Naive thymus-derived CD4-positive, alpha-beta T cell (primary cell): ENCODE measurements at regions of chr4 and their contacts with region 1.

Region 1: GRCh38 chr4:113394730-113395530 is 345.5 kb downstream of the ANK2 start:
- DNase-seq: peak in 8 of 9 donors; percentile 35 to 77 (median 66)
- ATAC-seq: peak; percentile 90
- H3K4me3 ChIP-seq: no peak overlapping the region
- H3K4me3 Mint-ChIP-seq: no peak overlapping the region
- H3K27ac ChIP-seq: no peak overlapping the region
- H3K27ac Mint-ChIP-seq: no peak overlapping the region
- H3K4me1 ChIP-seq: no peaks in the 10 kb centered on the region
- H3K4me1 Mint-ChIP-seq: peaks cover 0 to 2% (median 0%) of the 10 kb centered on the region in 7 donors
- H3K27me3 ChIP-seq: no peaks in the 10 kb centered on the region
- H3K27me3 Mint-ChIP-seq: peaks cover 0 to 7% (median 4%) of the 10 kb centered on the region in 5 donors

Region 2: GRCh38 chr4:113781439-113782040 is 386.6 kb after region 1 on chr4:
- CTCF ChIA-PET with region 1: no interaction called
- POLR2A ChIA-PET with region 1: no interaction called
- intact Hi-C with region 1: loop called (anchors 5 kb)
- DNase-seq: peak in 5 of 9 donors; percentile 21 to 28 (median 27)
- ATAC-seq: peak; percentile 41
- H3K4me3 ChIP-seq: no peak overlapping the region
- H3K4me3 Mint-ChIP-seq: no peak overlapping the region
- H3K27ac ChIP-seq: no peak overlapping the region
- H3K27ac Mint-ChIP-seq: no peak overlapping the region
- H3K4me1 ChIP-seq: no peaks in the 10 kb centered on the region
- H3K4me1 Mint-ChIP-seq: peaks cover 5 to 24% (median 12%) of the 10 kb centered on the region in 7 donors
- H3K27me3 ChIP-seq: no peaks in the 10 kb centered on the region
- H3K27me3 Mint-ChIP-seq: no peaks in the 10 kb centered on the region

Region 3: DNA sequence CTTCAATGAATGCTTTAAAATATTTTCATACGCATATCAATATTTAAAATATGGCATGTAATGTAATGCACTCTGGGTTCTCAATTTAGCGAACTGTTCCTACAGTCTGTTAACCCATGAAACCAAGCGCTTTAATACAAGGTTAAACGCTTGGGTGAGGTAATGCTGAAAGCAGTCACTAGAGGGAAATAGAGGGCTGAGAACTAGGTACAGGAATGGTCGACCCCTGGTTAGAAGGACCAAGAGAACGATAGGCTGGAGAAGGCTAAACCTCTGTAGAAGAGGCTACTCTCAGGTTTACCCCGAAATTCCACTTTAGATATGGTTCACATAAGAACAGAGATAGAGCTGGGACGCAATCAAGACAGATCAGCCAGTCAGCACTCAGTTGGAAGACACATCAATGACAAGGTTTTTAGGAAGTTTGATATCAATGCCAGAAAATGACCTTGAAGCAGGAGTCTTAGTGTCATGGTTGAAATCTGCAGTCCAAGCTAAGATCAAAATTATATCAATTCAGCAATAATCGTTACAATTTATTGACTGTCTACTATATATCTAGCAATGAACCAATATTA is 557.6 kb after region 1 on chr4:
- CTCF ChIA-PET with region 1: no interaction called
- POLR2A ChIA-PET with region 1: no interaction called
- intact Hi-C with region 1: loop called (anchors 1 to 2 kb)
- DNase-seq: peak in 5 of 9 donors; percentile 8 to 33 (median 21)
- ATAC-seq: peak; percentile 81
- H3K4me3 ChIP-seq: no peak overlapping the region
- H3K4me3 Mint-ChIP-seq: peak overlapping the region in 1 of 10 donors; percentile 13
- H3K27ac ChIP-seq: no peak overlapping the region
- H3K27ac Mint-ChIP-seq: no peak overlapping the region
- H3K4me1 ChIP-seq: no peaks in the 10 kb centered on the region
- H3K4me1 Mint-ChIP-seq: peaks cover 0 to 30% (median 20%) of the 10 kb centered on the region in 7 donors
- H3K27me3 ChIP-seq: no peaks in the 10 kb centered on the region
- H3K27me3 Mint-ChIP-seq: peaks cover 0 to 19% (median 5%) of the 10 kb centered on the region in 5 donors

Region 4: GRCh38 chr4:114386637-114387233 is 991.8 kb after region 1 on chr4:
- CTCF ChIA-PET with region 1: interaction called, 3 read pairs
- POLR2A ChIA-PET with region 1: no interaction called
- intact Hi-C with region 1: loop called (anchors 1 kb)
- DNase-seq: peak in 2 of 9 donors; percentile 10 to 11
- ATAC-seq: no peak
- H3K4me3 ChIP-seq: no peak overlapping the region
- H3K4me3 Mint-ChIP-seq: no peak overlapping the region
- H3K27ac ChIP-seq: no peak overlapping the region
- H3K27ac Mint-ChIP-seq: no peak overlapping the region
- H3K4me1 ChIP-seq: no peaks in the 10 kb centered on the region
- H3K4me1 Mint-ChIP-seq: peaks cover 0 to 2% (median 0%) of the 10 kb centered on the region in 7 donors
- H3K27me3 ChIP-seq: no peaks in the 10 kb centered on the region
- H3K27me3 Mint-ChIP-seq: peaks cover 0 to 17% (median 14%) of the 10 kb centered on the region in 5 donors

Region 5: DNA sequence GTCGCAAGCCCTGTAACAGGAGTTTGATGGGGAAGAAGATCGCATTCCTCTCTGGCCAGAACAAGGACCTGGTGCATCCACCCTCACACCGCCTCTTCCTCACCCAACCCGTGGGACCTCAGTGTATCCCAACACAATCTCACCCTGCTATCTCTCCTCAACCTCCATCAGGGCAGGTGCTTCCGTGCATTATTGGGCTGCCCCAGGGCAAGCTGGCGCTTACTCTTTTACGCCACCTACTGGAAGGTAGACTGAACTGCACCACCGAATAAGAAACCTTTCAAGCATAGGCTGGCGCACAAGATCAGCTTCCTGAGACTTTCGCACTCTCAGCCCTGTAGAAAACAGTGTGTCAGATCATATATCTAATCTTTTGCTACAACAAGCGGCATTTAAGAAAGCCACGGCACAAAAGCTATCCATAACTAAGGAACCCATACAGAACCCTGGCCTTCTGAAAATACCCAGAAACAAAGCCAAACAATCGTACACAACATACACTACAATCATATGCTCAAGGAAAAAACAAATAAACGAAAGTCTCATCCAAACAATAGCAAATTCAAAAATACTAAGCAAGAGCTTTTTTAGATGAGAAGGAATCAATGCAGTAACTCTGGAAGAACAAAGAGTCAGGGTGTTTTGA is 1413.0 kb after region 1 on chr4:
- CTCF ChIA-PET with region 1: no interaction called
- POLR2A ChIA-PET with region 1: no interaction called
- intact Hi-C with region 1: loop called in 1 of 2 experiments (anchors 2 kb)
- DNase-seq: peak in 8 of 9 donors; percentile 3 to 22 (median 12)
- ATAC-seq: peak; percentile 78
- H3K4me3 ChIP-seq: no peak overlapping the region
- H3K4me3 Mint-ChIP-seq: no peak overlapping the region
- H3K27ac ChIP-seq: no peak overlapping the region
- H3K27ac Mint-ChIP-seq: no peak overlapping the region
- H3K4me1 ChIP-seq: no peaks in the 10 kb centered on the region
- H3K4me1 Mint-ChIP-seq: no peaks in the 10 kb centered on the region
- H3K27me3 ChIP-seq: no peaks in the 10 kb centered on the region
- H3K27me3 Mint-ChIP-seq: peaks cover 0 to 10% (median 5%) of the 10 kb centered on the region in 5 donors